ENCODE measurements at regions of chr16 and their contacts with region 1.

Region 1: GRCh38 chr16:27154705-27155521 is 48.4 kb upstream of the KDM8 start:
- DNase-seq: peak; percentile 81
- ATAC-seq: peak; percentile 97
- H3K4me3 Mint-ChIP-seq: no peak overlapping the region
- H3K27ac Mint-ChIP-seq: no peak overlapping the region
- H3K4me1 Mint-ChIP-seq: peaks cover 10% of the 10 kb centered on the region
- H3K27me3 Mint-ChIP-seq: no peaks in the 10 kb centered on the region
- CTCF ChIP-seq: peak; percentile 99

Region 2: DNA sequence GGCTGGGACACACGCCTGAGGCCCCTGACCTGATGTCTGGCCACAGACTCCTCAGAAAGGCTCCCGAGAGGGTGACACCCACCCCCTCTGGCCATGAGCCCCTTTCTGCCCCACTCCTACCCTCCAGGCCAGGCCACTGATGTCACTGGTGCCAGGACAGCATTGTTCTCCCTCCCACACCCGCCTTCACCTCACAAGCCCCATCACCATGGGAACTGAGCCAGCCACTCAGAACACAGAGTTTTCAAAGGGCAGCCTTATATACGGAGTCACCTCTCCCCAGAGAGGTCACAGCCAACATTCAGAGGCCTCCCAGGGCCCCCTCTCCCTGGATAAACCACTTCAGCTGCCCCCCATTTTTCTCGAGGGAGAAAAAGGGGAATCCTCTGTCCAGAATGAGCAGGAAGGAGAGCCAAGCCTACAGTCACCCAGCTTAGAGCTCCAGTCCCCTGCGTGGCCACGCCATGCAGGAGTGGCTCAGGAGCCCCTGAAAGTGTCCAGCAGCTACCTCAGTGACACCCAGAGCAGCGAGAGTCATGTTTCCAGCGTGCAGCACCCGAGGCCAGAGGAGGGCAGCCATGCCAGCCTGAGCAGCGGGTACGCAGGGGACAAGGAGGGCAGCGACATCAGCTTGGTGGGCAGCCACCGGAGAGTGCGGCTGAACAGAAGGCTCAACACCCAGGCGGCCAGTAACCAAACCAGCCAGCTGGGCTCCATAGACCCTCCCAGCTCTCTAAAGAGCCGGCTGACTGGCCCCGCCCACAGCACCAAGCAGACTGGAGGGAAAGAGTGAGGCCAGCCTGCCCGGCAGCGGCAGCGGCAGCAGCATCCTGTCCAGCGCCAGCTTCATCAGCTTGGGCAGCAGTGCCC is 88.0 kb before region 1 on chr16 and contains the start of gene C16orf82:
- CTCF ChIA-PET with region 1: no interaction called
- POLR2A ChIA-PET with region 1: no interaction called
- intact Hi-C with region 1: no loop called
- DNase-seq: no peak
- ATAC-seq: no peak
- H3K4me3 Mint-ChIP-seq: no peak within 1 kb of the TSS
- H3K27ac Mint-ChIP-seq: no peak within 1 kb of the TSS
- H3K4me1 Mint-ChIP-seq: no peaks in the 10 kb centered on the region
- H3K27me3 Mint-ChIP-seq: peaks cover 5% of the 10 kb centered on the region
- CTCF ChIP-seq: no peak
- total RNA-seq, gene C16orf82: not detected

Region 3: DNA sequence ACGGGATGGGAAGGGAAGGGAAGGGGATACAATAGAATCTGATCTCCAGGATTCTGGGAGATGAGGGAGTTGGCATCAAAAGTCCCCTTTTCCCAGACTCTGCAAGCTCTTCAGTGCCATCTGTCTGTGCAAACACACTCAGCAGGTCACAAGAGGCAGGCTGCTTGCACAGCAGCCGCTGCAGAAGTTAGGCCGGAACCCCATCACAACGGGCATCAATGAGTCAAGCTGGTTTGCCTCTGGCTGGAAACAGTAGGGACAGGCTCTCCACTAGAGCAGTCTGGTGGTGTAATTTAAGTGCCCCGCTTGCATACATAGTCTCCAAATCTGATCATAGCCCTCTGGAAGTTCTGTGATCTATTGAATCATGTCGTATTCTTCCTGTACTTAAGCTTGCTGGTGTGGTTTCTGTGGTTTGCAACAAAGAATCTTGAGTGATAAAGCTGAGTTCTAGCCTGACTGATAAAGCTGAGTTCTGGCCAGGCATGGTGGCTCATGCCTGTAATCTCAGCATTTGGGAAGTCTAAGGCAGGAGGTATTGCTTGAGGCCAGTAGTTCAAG is 14.7 kb after region 1 on chr16:
- CTCF ChIA-PET with region 1: interaction called, 44 read pairs
- POLR2A ChIA-PET with region 1: interaction called, 8 read pairs
- intact Hi-C with region 1: no loop called
- DNase-seq: peak; percentile 90
- ATAC-seq: peak; percentile 89
- H3K4me3 Mint-ChIP-seq: peak overlapping the region; percentile 27
- H3K27ac Mint-ChIP-seq: peak overlapping the region; percentile 72
- H3K4me1 Mint-ChIP-seq: peaks cover 59% of the 10 kb centered on the region
- H3K27me3 Mint-ChIP-seq: no peaks in the 10 kb centered on the region
- CTCF ChIP-seq: no peak

Region 4: GRCh38 chr16:27455700-27456099 is 300.8 kb after region 1 on chr16:
- CTCF ChIA-PET with region 1: interaction called, 6 read pairs
- POLR2A ChIA-PET with region 1: no interaction called
- intact Hi-C with region 1: loop called (anchors 2 kb)
- DNase-seq: peak; percentile 60
- ATAC-seq: peak; percentile 14
- H3K4me3 Mint-ChIP-seq: no peak overlapping the region
- H3K27ac Mint-ChIP-seq: peak overlapping the region; percentile 73
- H3K4me1 Mint-ChIP-seq: peaks cover 71% of the 10 kb centered on the region
- H3K27me3 Mint-ChIP-seq: no peaks in the 10 kb centered on the region
- CTCF ChIP-seq: no peak

Measured in activated CD8-positive, alpha-beta T cell treated with anti-CD3 and anti-CD28 coated beads for 36 hours (primary cell).